Dorsolateral prefrontal cortex (tissue), 120 donors: ENCODE measurements at regions of chr9 and their contacts with region 1.

Region 1: GRCh38 chr9:104968025-104968982 is 40.3 kb upstream of the ABCA1 start:
- DNase-seq: peak; percentile 85 to 93 (median 90)
- H3K4me3 ChIP-seq: peak overlapping the region; percentile 52 to 99 (median 82)
- H3K27ac ChIP-seq: peak overlapping the region; percentile 89 to 100 (median 98)
- H3K27me3 ChIP-seq: no peaks in the 10 kb centered on the region
- CTCF ChIP-seq: peak in 12 of 56 donors; percentile 6 to 34 (median 23)

Region 2: DNA sequence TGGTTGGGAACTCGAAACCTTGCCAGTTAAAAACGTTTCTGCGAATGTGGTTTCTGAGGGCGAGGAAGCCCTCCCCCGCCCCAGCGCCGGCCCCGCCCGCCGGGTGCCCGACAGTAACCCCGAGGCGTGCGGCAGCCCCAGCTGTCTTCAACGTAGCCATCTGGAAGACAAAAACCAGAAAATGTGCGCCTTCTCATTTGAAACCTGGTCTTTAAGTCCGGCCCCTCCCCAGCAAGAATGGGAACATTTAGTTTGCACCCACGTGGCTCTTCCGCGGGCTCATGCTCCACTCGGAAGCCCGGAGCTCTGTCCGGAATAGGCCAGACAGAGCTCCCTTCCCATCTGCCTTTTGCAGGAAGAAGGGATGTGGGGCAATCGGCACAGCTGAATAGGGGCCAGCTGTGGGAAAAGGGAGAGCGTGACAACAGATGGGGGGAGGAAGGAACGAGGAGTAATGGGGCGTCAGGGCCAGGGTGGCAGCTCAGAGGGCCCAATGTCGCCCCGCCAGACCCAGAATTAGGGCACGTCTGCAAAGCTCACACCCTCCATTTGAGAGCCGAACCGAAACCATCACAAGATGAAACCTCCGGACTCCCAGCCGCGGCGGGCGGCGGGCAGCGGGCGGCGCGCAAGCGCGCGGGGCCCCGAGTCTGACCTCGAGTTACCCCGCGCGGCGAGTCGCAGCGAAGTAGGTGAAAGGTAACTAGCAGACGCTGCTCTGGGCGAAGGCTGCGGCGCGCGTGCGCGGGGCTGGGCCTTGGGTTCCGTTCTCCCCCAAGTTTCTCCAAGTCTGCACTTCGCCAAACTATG is 23.0 kb after region 1 on chr9:
- intact Hi-C with region 1: loop called in 1 of 2 experiments (anchors 2 kb)
- DNase-seq: peak; percentile 56 to 90 (median 84)
- H3K4me3 ChIP-seq: peak overlapping the region; percentile 51 to 88 (median 76)
- H3K27ac ChIP-seq: peak overlapping the region; percentile 52 to 97 (median 91)
- H3K27me3 ChIP-seq: no peaks in the 10 kb centered on the region
- CTCF ChIP-seq: peak in 18 of 56 donors; percentile 12 to 42 (median 23)